HEK293T (cell line): ENCODE measurements at regions of chr6 and their contacts with region 1.

Region 1: DNA sequence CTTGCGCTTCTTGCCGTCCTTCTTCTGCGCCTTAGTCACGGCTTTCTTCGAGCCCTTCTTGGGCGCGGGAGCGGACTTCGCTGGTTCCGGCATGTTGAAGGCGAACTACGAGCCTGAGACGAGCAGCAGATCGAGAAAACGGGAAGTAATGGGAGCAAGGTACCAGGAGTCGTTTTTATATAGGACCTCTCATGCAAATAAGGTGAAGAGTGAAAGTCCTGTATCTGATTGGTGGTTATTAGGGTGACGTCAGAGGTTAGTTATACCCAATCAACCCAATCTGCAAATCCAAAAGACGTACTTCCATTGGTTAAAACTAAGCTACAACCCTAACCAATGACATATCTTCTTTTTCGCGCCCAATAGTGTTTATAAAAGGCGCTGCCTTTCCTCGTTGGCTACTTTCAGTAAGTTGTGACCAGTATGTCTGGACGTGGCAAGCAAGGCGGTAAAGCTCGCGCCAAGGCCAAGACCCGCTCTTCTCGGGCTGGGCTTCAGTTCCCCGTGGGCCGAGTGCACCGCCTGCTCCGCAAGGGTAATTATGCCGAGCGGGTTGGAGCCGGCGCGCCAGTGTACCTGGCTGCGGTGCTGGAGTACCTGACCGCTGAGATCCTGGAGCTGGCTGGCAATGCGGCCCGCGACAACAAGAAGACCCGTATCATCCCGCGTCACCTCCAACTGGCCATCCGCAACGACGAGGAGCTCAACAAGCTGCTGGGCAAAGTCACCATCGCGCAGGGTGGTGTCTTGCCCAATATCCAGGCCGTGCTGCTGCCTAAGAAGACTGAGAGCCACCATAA is 100.6 kb upstream of the PRSS16 start:
- DNase-seq: peak; percentile 84

Region 2: GRCh38 chr6:26025894-26026832 is 1120.7 kb before region 1 on chr6:
- CTCF ChIA-PET with region 1: no interaction called
- POLR2A ChIA-PET with region 1: interaction called, 20 read pairs
- DNase-seq: peak; percentile 55

Region 3: GRCh38 chr6:27132532-27133280 is 14.2 kb before region 1 on chr6:
- CTCF ChIA-PET with region 1: interaction called, 4 read pairs
- POLR2A ChIA-PET with region 1: interaction called, 439 read pairs
- DNase-seq: peak; percentile 85

Region 4: GRCh38 chr6:27168586-27169443 is 21.9 kb after region 1 on chr6:
- CTCF ChIA-PET with region 1: no interaction called
- POLR2A ChIA-PET with region 1: interaction called, 11 read pairs
- DNase-seq: no peak

Region 5: DNA sequence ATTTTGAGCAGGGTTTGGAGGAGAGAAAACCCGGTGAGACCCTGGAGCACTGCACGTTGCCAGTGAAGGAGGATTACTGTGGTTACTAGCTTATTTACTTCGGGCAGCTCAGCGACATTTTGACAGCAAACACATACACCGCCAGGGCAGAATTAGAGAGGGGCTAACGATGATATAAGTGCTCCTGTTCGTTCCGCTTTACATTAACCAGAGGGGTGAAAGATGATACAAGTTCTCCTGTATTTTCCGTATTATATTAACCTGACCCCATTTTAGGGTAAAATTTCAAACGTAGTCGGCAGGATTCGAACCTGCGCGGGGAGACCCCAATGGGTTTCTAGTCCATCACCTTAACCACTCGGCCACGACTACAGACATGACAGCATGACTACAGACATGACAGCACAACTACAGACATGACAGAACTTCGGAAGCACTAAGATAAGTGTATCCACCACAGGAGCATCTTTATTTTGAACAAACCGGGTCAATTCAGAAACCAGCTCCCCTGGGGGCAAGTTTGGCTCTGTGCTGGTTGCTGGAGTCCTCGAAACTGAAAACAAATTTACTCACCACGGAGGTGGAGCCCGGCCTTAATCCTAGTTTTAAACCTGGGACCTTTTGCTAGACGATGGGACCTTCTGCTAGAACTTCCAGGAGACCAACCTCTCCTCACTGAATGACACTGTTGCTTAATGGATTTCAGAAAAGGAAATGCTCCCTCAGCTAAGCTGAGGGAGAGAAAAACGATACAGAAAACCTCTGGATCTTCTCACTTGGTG is 406.4 kb after region 1 on chr6:
- CTCF ChIA-PET with region 1: no interaction called
- POLR2A ChIA-PET with region 1: no interaction called
- DNase-seq: peak; percentile 58

Region 6: DNA sequence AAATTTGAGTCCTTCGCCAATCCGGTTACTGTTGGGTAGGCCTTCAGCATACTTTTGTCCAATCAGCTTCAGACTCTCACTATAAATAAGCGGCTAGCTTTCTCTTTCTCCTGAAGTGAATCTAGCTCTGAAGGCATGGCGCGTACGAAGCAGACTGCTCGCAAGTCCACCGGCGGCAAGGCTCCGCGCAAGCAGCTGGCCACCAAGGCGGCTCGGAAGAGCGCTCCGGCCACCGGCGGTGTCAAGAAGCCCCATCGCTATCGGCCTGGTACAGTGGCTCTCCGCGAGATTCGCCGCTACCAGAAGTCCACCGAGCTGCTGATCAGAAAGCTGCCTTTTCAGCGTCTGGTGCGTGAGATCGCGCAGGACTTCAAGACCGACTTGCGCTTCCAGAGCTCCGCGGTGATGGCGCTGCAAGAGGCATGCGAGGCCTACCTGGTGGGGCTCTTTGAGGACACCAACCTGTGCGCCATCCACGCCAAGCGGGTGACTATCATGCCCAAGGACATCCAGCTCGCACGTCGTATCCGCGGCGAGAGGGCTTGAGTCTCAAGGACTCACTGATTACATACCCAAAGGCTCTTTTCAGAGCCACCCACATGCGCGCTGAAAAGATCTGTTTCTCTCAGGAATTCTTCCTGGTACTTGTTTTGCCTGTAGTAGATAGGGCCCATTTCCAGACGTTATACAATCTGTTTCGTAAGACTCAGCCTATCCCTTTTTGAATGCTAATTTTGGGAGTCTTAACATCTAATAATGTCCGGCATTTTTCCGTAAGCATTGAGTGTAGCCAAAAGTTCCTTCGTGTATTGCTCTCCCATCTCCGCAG is 663.2 kb after region 1 on chr6:
- CTCF ChIA-PET with region 1: no interaction called
- POLR2A ChIA-PET with region 1: interaction called, 65 read pairs
- DNase-seq: peak; percentile 76